ENCODE measurements at regions of chr13 and their contacts with region 1.

Region 1: DNA sequence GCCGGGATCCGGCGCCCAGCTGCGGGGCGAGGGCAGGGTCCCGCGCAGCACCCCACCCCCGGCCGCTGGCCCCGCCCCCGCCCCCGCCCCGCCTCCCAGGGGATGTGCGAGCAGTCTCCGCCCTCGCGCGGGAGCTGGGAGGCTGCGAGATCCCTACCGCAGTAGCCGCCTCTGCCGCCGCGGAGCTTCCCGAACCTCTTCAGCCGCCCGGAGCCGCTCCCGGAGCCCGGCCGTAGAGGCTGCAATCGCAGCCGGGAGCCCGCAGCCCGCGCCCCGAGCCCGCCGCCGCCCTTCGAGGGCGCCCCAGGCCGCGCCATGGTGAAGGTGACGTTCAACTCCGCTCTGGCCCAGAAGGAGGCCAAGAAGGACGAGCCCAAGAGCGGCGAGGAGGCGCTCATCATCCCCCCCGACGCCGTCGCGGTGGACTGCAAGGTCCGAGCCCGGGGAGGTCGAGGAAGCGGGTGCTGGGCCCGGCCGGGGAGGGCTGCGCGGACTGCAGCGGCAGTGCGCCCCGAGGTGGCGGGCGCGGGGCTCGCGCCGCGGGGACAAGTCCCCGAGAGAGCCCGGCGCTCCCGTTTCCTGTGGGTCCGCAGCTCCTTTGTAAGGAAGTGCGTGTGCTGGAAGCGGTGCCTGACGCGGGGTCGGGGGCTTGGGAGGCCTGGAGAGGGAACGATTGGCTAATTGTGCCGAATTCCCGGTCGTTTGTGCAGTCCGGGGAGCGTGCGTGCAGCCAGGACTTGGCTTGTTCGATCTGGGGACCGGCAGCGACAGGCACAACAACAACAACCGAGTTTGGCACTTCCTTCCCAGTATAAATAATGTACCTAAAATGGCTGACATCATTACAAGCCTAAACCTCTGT is at the start of gene ITM2B:
- DNase-seq: peak; percentile 40 to 86 (median 64)
- ATAC-seq: peak; percentile 72
- H3K4me3 ChIP-seq: peak within 1 kb of the TSS; percentile 96 to 98
- H3K4me3 Mint-ChIP-seq: peak within 1 kb of the TSS; percentile 98
- H3K27ac ChIP-seq: peak within 1 kb of the TSS; percentile 92 to 94
- H3K27ac Mint-ChIP-seq: peak within 1 kb of the TSS; percentile 99
- H3K4me1 ChIP-seq: peaks cover 44% of the 10 kb centered on the region
- H3K4me1 Mint-ChIP-seq: peaks cover 62% of the 10 kb centered on the region
- H3K27me3 ChIP-seq: no peaks in the 10 kb centered on the region
- H3K27me3 Mint-ChIP-seq: no peaks in the 10 kb centered on the region
- CTCF ChIP-seq: peak; percentile 59
- total RNA-seq, gene ITM2B: 280 to 308 TPM

Region 2: GRCh38 chr13:48037346-48038173 is 195.7 kb before region 1 on chr13 and contains the start of gene NUDT15:
- CTCF ChIA-PET with region 1: no interaction called
- POLR2A ChIA-PET with region 1: interaction called, 5 read pairs
- intact Hi-C with region 1: loop called (anchors 2 to 5 kb)
- DNase-seq: peak; percentile 88 to 99 (median 97)
- ATAC-seq: peak; percentile 90
- H3K4me3 ChIP-seq: peak within 1 kb of the TSS; percentile 81 to 96
- H3K4me3 Mint-ChIP-seq: peak within 1 kb of the TSS; percentile 97
- H3K27ac ChIP-seq: peak within 1 kb of the TSS; percentile 99
- H3K27ac Mint-ChIP-seq: peak within 1 kb of the TSS; percentile 98
- H3K4me1 ChIP-seq: peaks cover 20% of the 10 kb centered on the region
- H3K4me1 Mint-ChIP-seq: peaks cover 32% of the 10 kb centered on the region
- H3K27me3 ChIP-seq: no peaks in the 10 kb centered on the region
- H3K27me3 Mint-ChIP-seq: no peaks in the 10 kb centered on the region
- CTCF ChIP-seq: peak; percentile 99
- total RNA-seq, gene NUDT15: 23.8 to 24.9 TPM

Region 3: DNA sequence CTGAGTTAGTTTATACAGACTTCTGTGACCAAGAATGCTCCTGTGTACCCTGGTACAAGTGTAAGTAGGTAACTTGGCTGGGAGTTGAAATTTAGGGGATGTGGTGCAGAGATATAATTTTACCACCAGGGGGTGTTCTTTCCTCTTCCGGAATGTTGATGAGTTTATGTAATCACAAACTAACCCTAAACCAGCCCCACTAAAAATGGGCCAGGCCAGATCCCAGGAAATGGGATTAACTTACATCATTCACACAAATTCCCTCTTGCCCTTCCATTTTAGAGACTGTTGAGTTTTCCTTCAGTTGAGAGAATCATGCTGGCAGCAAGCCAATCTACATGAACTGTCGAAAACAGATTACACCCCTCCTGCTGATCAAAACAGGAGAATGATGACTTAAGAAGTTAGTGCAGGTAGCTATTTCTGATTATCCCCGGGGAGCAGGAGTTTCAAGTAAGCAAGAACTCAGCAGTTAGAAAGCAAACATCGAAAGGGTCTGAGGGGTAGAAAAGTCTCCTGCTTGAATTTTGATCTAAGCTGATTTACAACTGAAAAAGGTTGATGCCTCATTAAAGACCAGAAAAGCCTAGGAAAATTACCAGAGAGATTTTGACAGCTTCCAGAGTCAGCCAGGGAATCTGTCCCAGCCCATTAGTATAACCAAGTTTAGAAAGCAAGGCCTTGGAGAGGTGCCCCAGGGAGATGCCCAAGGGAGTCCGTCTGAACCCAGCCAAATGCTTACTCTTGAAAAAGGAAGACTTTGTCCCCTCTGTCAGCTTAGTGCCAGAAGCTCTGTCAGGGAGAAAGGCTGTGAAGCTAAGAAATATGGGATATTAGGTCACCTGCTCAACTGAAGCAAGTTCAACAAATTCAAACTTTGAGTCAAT is 106.1 kb before region 1 on chr13:
- CTCF ChIA-PET with region 1: interaction called, 62 read pairs
- POLR2A ChIA-PET with region 1: interaction called, 24 read pairs
- intact Hi-C with region 1: loop called (anchors 1 kb)
- DNase-seq: peak; percentile 11 to 84 (median 39)
- ATAC-seq: peak; percentile 93
- H3K4me3 ChIP-seq: peak overlapping the region in 1 of 2 experiments; percentile 6
- H3K4me3 Mint-ChIP-seq: peak overlapping the region; percentile 55
- H3K27ac ChIP-seq: peak overlapping the region; percentile 30 to 75
- H3K27ac Mint-ChIP-seq: peak overlapping the region; percentile 94
- H3K4me1 ChIP-seq: peaks cover 13% of the 10 kb centered on the region
- H3K4me1 Mint-ChIP-seq: peaks cover 31% of the 10 kb centered on the region
- H3K27me3 ChIP-seq: no peaks in the 10 kb centered on the region
- H3K27me3 Mint-ChIP-seq: no peaks in the 10 kb centered on the region
- CTCF ChIP-seq: peak; percentile 80

Region 4: GRCh38 chr13:48155848-48156247 is 77.4 kb before region 1 on chr13:
- CTCF ChIA-PET with region 1: interaction called, 20 read pairs
- POLR2A ChIA-PET with region 1: interaction called, 31 read pairs
- intact Hi-C with region 1: loop called (anchors 1 kb)
- DNase-seq: peak in 6 of 9 experiments; percentile 14 to 90 (median 46)
- ATAC-seq: peak; percentile 71
- H3K4me3 ChIP-seq: peak overlapping the region in 1 of 2 experiments; percentile 37
- H3K4me3 Mint-ChIP-seq: peak overlapping the region; percentile 44
- H3K27ac ChIP-seq: peak overlapping the region; percentile 61 to 89
- H3K27ac Mint-ChIP-seq: peak overlapping the region; percentile 96
- H3K4me1 ChIP-seq: peaks cover 75% of the 10 kb centered on the region
- H3K4me1 Mint-ChIP-seq: peaks cover 81% of the 10 kb centered on the region
- H3K27me3 ChIP-seq: no peaks in the 10 kb centered on the region
- H3K27me3 Mint-ChIP-seq: no peaks in the 10 kb centered on the region
- CTCF ChIP-seq: no peak

Region 5: DNA sequence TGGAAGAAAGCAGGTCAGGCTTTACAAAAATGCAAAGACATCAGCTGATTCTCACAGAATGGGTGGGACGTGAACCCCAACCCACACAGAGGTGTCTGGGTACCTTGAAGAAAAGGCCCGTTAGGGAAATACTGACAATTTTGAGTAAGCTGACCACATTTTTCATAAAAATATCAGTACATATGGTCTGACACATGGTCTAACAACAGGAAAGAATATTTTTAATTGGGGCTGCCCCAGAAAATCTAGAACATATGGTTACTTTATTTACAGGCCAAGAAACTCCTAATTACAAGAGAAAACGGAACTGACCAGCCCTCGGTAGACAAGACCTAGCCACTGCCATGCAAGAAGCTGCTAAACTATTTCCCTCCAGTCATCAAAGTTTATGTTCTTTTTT is 49.0 kb before region 1 on chr13:
- CTCF ChIA-PET with region 1: interaction called, 14 read pairs
- POLR2A ChIA-PET with region 1: interaction called, 9 read pairs
- intact Hi-C with region 1: loop called (anchors 2 kb)
- DNase-seq: no peak
- ATAC-seq: no peak
- H3K4me3 ChIP-seq: peak overlapping the region in 1 of 2 experiments; percentile 5
- H3K4me3 Mint-ChIP-seq: peak overlapping the region; percentile 26
- H3K27ac ChIP-seq: peak overlapping the region in 1 of 2 experiments; percentile 79
- H3K27ac Mint-ChIP-seq: peak overlapping the region; percentile 97
- H3K4me1 ChIP-seq: peaks cover 68% of the 10 kb centered on the region
- H3K4me1 Mint-ChIP-seq: peaks cover 64% of the 10 kb centered on the region
- H3K27me3 ChIP-seq: no peaks in the 10 kb centered on the region
- H3K27me3 Mint-ChIP-seq: no peaks in the 10 kb centered on the region
- CTCF ChIP-seq: no peak

Region 6: DNA sequence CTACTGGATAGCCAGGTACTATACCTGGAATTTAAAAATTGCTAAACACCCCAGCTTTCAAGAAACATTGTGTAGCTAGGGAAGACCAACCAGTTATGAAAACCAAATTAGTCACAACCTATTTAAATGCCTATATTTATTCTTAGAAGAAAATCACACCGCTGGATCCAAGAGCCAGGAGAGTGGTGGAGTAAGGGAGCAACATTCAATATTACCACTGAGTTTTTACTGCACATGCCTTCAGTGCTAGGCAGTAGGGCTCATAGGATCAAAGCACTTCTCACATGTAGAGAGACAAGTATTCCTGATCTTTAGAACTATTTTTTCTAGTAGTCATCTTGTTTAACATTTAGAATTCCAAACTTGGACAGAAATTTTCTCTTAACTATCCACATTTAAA is 10.9 kb after region 1 on chr13:
- CTCF ChIA-PET with region 1: interaction called, 3 read pairs
- POLR2A ChIA-PET with region 1: interaction called, 11 read pairs
- intact Hi-C with region 1: loop called in 1 of 2 experiments (anchors 1 kb)
- DNase-seq: no peak
- ATAC-seq: no peak
- H3K4me3 ChIP-seq: no peak overlapping the region
- H3K4me3 Mint-ChIP-seq: no peak overlapping the region
- H3K27ac ChIP-seq: peak overlapping the region in 1 of 2 experiments; percentile 20
- H3K27ac Mint-ChIP-seq: peak overlapping the region; percentile 9
- H3K4me1 ChIP-seq: peaks cover 74% of the 10 kb centered on the region
- H3K4me1 Mint-ChIP-seq: peaks cover 80% of the 10 kb centered on the region
- H3K27me3 ChIP-seq: no peaks in the 10 kb centered on the region
- H3K27me3 Mint-ChIP-seq: no peaks in the 10 kb centered on the region
- CTCF ChIP-seq: no peak

Region 7: GRCh38 chr13:48975856-48976575 is 742.7 kb after region 1 on chr13 and contains the start of gene FNDC3A:
- CTCF ChIA-PET with region 1: no interaction called
- POLR2A ChIA-PET with region 1: no interaction called
- intact Hi-C with region 1: loop called in 1 of 2 experiments (anchors 10 kb)
- DNase-seq: peak; percentile 70 to 93 (median 83)
- ATAC-seq: peak; percentile 70
- H3K4me3 ChIP-seq: peak within 1 kb of the TSS; percentile 79 to 80
- H3K4me3 Mint-ChIP-seq: peak within 1 kb of the TSS; percentile 97
- H3K27ac ChIP-seq: peak within 1 kb of the TSS; percentile 79 to 91
- H3K27ac Mint-ChIP-seq: peak within 1 kb of the TSS; percentile 99
- H3K4me1 ChIP-seq: peaks cover 33% of the 10 kb centered on the region
- H3K4me1 Mint-ChIP-seq: peaks cover 42% of the 10 kb centered on the region
- H3K27me3 ChIP-seq: no peaks in the 10 kb centered on the region
- H3K27me3 Mint-ChIP-seq: no peaks in the 10 kb centered on the region
- CTCF ChIP-seq: no peak
- total RNA-seq, gene FNDC3A: 27.0 to 27.7 TPM